CD14-positive monocyte (primary cell): ENCODE measurements at regions of chr13 and their contacts with region 1.

Region 1: DNA sequence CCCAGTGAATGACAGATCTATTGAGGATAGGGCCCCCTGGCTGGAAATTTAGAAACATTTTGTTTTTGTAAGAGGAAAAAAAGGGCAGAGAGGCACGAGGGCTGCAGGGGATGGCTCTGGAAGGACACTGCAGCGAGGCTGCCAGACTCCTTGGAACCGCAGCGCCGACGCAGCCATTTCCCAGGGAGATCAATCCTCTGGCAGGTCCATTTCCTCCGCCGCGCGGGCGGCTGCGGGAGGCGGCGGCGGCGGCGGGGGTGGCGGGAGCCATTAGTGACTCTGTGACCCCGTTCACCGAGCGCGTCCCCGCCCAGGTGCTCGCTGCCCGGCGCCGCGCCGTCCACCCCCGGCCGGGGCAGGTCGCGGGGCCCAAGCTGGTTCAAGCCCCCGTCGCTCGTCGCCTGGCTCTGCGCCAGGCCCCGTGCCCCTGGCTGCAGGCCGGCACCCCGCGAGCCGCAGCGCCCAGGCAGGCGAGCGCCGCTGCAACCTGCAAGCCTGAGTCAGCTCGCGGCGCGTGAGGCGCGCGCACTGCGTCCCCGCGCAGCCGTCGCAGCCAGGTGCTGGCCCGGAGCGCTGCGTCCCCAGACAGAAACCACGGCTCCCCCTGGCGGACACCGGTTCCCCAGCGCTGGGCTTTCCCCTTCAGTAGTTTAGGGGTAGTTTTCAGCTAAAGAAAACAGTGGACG is 192.6 kb downstream of the KATNAL1 start:
- DNase-seq: peak; percentile 75 to 86 (median 75)
- H3K4me3 ChIP-seq: peak overlapping the region in 2 of 3 experiments; percentile 14 to 74
- H3K4me3 Mint-ChIP-seq: peak overlapping the region; percentile 76 to 88
- H3K27ac ChIP-seq: no peak overlapping the region
- H3K27ac Mint-ChIP-seq: no peak overlapping the region
- H3K4me1 ChIP-seq: peaks cover 13 to 14% of the 10 kb centered on the region in 2 donors
- H3K4me1 Mint-ChIP-seq: peaks cover 27% of the 10 kb centered on the region
- H3K27me3 ChIP-seq: peaks cover 2 to 18% of the 10 kb centered on the region in 2 donors
- H3K27me3 Mint-ChIP-seq: peaks cover 13 to 22% (median 21%) of the 10 kb centered on the region in 3 donors
- CTCF ChIP-seq: peak; percentile 91

Region 2: DNA sequence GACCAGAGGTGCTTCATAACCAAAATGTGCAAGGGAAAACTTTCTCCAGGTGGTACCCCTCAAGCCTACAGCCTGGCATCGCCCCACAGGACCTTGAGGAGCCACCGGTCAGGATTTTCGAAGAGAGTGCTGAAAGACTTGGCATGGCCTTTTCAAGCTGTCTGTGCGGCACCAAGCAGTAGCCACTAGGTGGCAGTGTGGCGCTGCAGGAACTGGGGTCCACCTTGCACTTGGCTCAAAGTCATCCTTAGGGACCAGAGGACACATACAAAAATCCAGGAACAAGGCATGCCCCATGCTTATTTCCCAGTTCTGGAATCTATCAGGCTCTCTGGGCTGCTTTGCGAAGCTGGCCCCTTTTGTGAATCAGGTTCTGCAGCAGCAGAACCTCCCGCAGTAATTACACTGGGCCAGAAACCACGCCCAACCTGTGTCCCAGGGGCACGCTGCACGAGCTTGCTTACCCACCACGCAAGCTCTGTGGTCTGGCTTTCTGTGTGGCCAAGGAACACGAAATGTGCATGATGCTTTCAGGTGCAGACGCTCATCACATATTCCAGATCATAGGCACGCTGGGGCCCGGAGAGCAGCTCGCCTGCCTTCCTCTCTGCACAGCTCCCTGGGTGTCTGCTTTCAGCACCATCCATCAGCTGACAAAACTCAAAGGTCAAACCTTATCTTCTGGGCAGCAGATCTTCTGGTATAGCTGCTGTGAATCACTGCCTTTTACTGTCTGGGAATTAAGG is 606.4 kb before region 1 on chr13:
- intact Hi-C with region 1: loop called (anchors 2 to 5 kb)
- DNase-seq: peak; percentile 50 to 66 (median 66)
- H3K4me3 ChIP-seq: no peak overlapping the region
- H3K4me3 Mint-ChIP-seq: no peak overlapping the region
- H3K27ac ChIP-seq: no peak overlapping the region
- H3K27ac Mint-ChIP-seq: no peak overlapping the region
- H3K4me1 ChIP-seq: peaks cover 0 to under 1% of the 10 kb centered on the region in 2 donors
- H3K4me1 Mint-ChIP-seq: peaks cover 2% of the 10 kb centered on the region
- H3K27me3 ChIP-seq: no peaks in the 10 kb centered on the region
- H3K27me3 Mint-ChIP-seq: peaks cover 0 to 11% (median 4%) of the 10 kb centered on the region in 3 donors
- CTCF ChIP-seq: peak; percentile 98

Region 3: GRCh38 chr13:29513397-29514322 is 601.1 kb before region 1 on chr13:
- intact Hi-C with region 1: loop called (anchors 2 to 5 kb)
- DNase-seq: no peak
- H3K4me3 ChIP-seq: no peak overlapping the region
- H3K4me3 Mint-ChIP-seq: no peak overlapping the region
- H3K27ac ChIP-seq: no peak overlapping the region
- H3K27ac Mint-ChIP-seq: peak overlapping the region in 2 of 7 donors; percentile 44 to 73
- H3K4me1 ChIP-seq: no peaks in the 10 kb centered on the region
- H3K4me1 Mint-ChIP-seq: no peaks in the 10 kb centered on the region
- H3K27me3 ChIP-seq: no peaks in the 10 kb centered on the region
- H3K27me3 Mint-ChIP-seq: no peaks in the 10 kb centered on the region
- CTCF ChIP-seq: no peak

Region 4: GRCh38 chr13:29771247-29771646 is 343.5 kb before region 1 on chr13:
- intact Hi-C with region 1: loop called (anchors 2 to 5 kb)
- DNase-seq: peak in 2 of 3 donors; percentile 10 to 34
- H3K4me3 ChIP-seq: no peak overlapping the region
- H3K4me3 Mint-ChIP-seq: no peak overlapping the region
- H3K27ac ChIP-seq: no peak overlapping the region
- H3K27ac Mint-ChIP-seq: no peak overlapping the region
- H3K4me1 ChIP-seq: no peaks in the 10 kb centered on the region
- H3K4me1 Mint-ChIP-seq: no peaks in the 10 kb centered on the region
- H3K27me3 ChIP-seq: no peaks in the 10 kb centered on the region
- H3K27me3 Mint-ChIP-seq: no peaks in the 10 kb centered on the region
- CTCF ChIP-seq: peak; percentile 69

Region 5: GRCh38 chr13:30388406-30389283 is 273.9 kb after region 1 on chr13:
- intact Hi-C with region 1: no loop called
- DNase-seq: peak in 2 of 3 donors; percentile 26 to 35
- H3K4me3 ChIP-seq: no peak overlapping the region
- H3K4me3 Mint-ChIP-seq: peak overlapping the region; percentile 24 to 28
- H3K27ac ChIP-seq: peak overlapping the region in 1 of 2 donors; percentile 52
- H3K27ac Mint-ChIP-seq: peak overlapping the region; percentile 41 to 82 (median 65)
- H3K4me1 ChIP-seq: peaks cover 25 to 26% of the 10 kb centered on the region in 2 donors
- H3K4me1 Mint-ChIP-seq: peaks cover 26% of the 10 kb centered on the region
- H3K27me3 ChIP-seq: no peaks in the 10 kb centered on the region
- H3K27me3 Mint-ChIP-seq: peaks cover 0 to 6% (median 5%) of the 10 kb centered on the region in 3 donors
- CTCF ChIP-seq: no peak